CD4-positive, alpha-beta memory T cell (primary cell): ENCODE measurements at regions of chr21 and their contacts with region 1.

Region 1: GRCh38 chr21:33360881-33361602 is 36.3 kb downstream of the IFNAR1 start:
- DNase-seq: peak; percentile 82 to 87 (median 83)
- H3K4me3 ChIP-seq: peak overlapping the region; percentile 47 to 58
- H3K4me3 Mint-ChIP-seq: peak overlapping the region; percentile 83 to 97 (median 91)
- H3K27ac ChIP-seq: peak overlapping the region; percentile 47
- H3K27ac Mint-ChIP-seq: peak overlapping the region; percentile 87 to 99 (median 94)
- H3K4me1 ChIP-seq: peaks cover 21% of the 10 kb centered on the region
- H3K4me1 Mint-ChIP-seq: peaks cover 13 to 22% (median 18%) of the 10 kb centered on the region in 4 donors
- H3K27me3 ChIP-seq: no peaks in the 10 kb centered on the region
- H3K27me3 Mint-ChIP-seq: peaks cover 0 to under 1% of the 10 kb centered on the region in 2 donors

Region 2: DNA sequence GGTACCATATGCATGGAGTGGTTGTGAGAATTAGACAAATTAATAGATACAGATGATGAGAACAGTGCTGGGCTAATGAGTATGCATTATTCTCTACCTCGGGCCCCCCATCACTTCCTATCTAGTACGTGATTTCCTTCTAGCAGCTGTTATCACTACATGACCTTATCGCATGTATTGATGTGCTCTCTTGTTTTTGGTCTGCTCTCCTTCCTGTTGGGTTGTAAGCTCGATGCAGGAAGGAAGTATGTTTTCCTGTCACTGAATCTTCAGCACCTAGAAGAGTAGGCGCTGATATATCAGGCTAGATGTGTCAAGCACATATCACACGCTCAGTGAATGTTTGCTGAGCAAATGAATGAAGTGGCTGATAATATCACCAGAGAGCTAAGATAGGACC is 175.2 kb before region 1 on chr21:
- CTCF ChIA-PET with region 1: interaction called, 7 read pairs
- POLR2A ChIA-PET with region 1: interaction called, 11 read pairs
- intact Hi-C with region 1: no loop called
- DNase-seq: peak; percentile 42 to 70 (median 56)
- H3K4me3 ChIP-seq: no peak overlapping the region
- H3K4me3 Mint-ChIP-seq: peak overlapping the region; percentile 18 to 82 (median 71)
- H3K27ac ChIP-seq: peak overlapping the region; percentile 11
- H3K27ac Mint-ChIP-seq: peak overlapping the region; percentile 76 to 93 (median 88)
- H3K4me1 ChIP-seq: peaks cover 38% of the 10 kb centered on the region
- H3K4me1 Mint-ChIP-seq: peaks cover 26 to 47% (median 30%) of the 10 kb centered on the region in 4 donors
- H3K27me3 ChIP-seq: no peaks in the 10 kb centered on the region
- H3K27me3 Mint-ChIP-seq: peaks cover 0 to 1% of the 10 kb centered on the region in 2 donors

Region 3: DNA sequence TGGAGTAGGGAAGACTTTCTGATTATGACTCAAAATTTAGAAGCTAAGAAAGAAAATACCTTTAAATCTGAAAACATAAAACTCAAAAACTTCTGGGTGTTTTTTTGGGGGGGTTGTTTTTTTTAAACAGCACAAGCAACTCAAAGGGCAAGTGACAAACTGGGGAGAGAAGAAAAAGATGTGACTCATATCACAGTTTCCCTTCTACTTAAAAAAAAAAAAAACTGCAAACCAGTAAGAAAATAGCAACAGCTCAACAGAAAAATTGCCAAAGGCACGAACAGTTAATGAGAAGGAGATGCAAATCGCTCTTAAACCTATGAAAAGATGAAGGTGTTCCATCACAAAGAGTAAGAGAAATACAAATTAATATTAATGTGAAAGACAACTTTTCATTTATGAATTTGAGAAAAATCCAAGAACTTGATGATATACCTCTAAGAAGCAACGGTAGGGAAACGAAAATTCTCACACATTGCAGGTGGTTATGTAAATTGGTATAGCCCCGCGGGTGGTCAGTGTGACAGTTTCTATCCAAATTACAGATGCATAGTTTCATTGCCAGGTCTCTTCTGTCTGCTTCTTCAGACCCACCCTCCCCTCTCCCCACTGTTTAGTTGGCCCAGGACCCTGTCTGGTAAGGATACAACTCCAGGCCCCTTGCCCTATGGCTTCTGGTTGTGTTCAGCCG is 122.3 kb before region 1 on chr21:
- CTCF ChIA-PET with region 1: interaction called, 25 read pairs
- POLR2A ChIA-PET with region 1: interaction called, 14 read pairs
- intact Hi-C with region 1: no loop called
- DNase-seq: peak in 4 of 5 donors; percentile 22 to 43 (median 24)
- H3K4me3 ChIP-seq: peak overlapping the region in 1 of 2 donors; percentile 40
- H3K4me3 Mint-ChIP-seq: peak overlapping the region; percentile 64 to 79 (median 70)
- H3K27ac ChIP-seq: peak overlapping the region; percentile 60
- H3K27ac Mint-ChIP-seq: peak overlapping the region; percentile 65 to 94 (median 88)
- H3K4me1 ChIP-seq: peaks cover 93% of the 10 kb centered on the region
- H3K4me1 Mint-ChIP-seq: peaks cover 66 to 92% (median 78%) of the 10 kb centered on the region in 4 donors
- H3K27me3 ChIP-seq: no peaks in the 10 kb centered on the region
- H3K27me3 Mint-ChIP-seq: no peaks in the 10 kb centered on the region

Region 4: GRCh38 chr21:33299181-33299752 is 61.8 kb before region 1 on chr21:
- CTCF ChIA-PET with region 1: interaction called, 19 read pairs
- POLR2A ChIA-PET with region 1: interaction called, 11 read pairs
- intact Hi-C with region 1: no loop called
- DNase-seq: peak; percentile 39 to 58 (median 41)
- H3K4me3 ChIP-seq: peak overlapping the region in 1 of 2 donors; percentile 19
- H3K4me3 Mint-ChIP-seq: peak overlapping the region; percentile 48 to 88 (median 70)
- H3K27ac ChIP-seq: peak overlapping the region; percentile 10
- H3K27ac Mint-ChIP-seq: peak overlapping the region; percentile 69 to 95 (median 84)
- H3K4me1 ChIP-seq: peaks cover 37% of the 10 kb centered on the region
- H3K4me1 Mint-ChIP-seq: peaks cover 33 to 64% (median 44%) of the 10 kb centered on the region in 4 donors
- H3K27me3 ChIP-seq: no peaks in the 10 kb centered on the region
- H3K27me3 Mint-ChIP-seq: no peaks in the 10 kb centered on the region

Region 5: DNA sequence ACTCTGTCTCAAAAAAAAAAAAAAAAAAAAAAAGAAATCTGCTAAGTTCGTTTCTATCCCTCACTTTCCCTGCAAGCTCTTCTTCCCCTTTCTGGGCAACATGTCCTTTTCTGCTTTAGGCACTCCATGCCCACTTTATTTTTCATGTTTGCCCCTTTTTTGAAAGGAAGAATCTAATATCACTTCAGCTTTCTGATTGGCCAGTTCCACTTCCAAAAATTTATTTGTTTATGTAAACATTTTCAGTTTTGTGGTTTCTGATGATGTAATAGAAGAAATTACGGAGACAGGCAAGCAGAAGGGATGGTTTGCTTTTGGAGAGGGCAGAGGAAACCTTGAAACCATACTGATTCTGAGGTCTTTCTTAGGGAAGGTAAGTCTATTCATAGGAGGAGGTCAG is 21.1 kb before region 1 on chr21:
- CTCF ChIA-PET with region 1: interaction called, 90 read pairs
- POLR2A ChIA-PET with region 1: interaction called, 5 read pairs
- intact Hi-C with region 1: no loop called
- DNase-seq: no peak
- H3K4me3 ChIP-seq: no peak overlapping the region
- H3K4me3 Mint-ChIP-seq: no peak overlapping the region
- H3K27ac ChIP-seq: no peak overlapping the region
- H3K27ac Mint-ChIP-seq: peak overlapping the region in 4 of 7 donors; percentile 45 to 81 (median 67)
- H3K4me1 ChIP-seq: no peaks in the 10 kb centered on the region
- H3K4me1 Mint-ChIP-seq: peaks cover 9 to 16% (median 13%) of the 10 kb centered on the region in 4 donors
- H3K27me3 ChIP-seq: no peaks in the 10 kb centered on the region
- H3K27me3 Mint-ChIP-seq: no peaks in the 10 kb centered on the region

Region 6: DNA sequence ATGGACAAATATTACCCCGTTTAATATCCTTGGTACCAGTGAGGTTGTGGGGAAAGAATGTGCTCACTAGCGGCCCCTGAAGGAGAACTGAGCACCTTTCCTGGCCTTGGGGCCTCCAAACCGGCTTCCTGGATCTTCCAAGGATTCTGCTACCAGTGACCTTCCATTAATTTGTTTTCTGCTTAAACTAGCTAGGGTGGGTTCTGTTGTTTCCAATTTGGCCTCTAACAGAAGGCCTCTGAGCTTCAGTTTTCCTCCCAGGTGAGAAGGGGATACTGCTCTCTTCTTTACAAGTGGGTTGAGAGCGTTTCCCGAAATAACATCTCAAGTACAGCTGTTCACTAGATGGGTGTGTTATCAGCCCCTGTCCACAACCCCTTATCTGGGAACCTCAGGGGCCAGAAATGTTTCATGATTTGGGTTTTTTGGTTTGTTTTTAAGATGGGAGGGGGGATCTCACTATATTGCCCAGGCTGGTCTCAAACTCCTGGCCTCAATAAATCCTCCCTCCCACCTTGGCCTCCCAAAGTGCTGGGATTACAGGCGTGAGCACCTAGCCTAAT is 25.3 kb after region 1 on chr21:
- CTCF ChIA-PET with region 1: interaction called, 59 read pairs
- POLR2A ChIA-PET with region 1: interaction called, 62 read pairs
- intact Hi-C with region 1: no loop called
- DNase-seq: no peak
- H3K4me3 ChIP-seq: no peak overlapping the region
- H3K4me3 Mint-ChIP-seq: no peak overlapping the region
- H3K27ac ChIP-seq: no peak overlapping the region
- H3K27ac Mint-ChIP-seq: no peak overlapping the region
- H3K4me1 ChIP-seq: peaks cover 44% of the 10 kb centered on the region
- H3K4me1 Mint-ChIP-seq: peaks cover 33 to 50% (median 43%) of the 10 kb centered on the region in 4 donors
- H3K27me3 ChIP-seq: no peaks in the 10 kb centered on the region
- H3K27me3 Mint-ChIP-seq: peaks cover 0 to 3% of the 10 kb centered on the region in 2 donors

Region 7: GRCh38 chr21:33441489-33442477 is 80.7 kb after region 1 on chr21:
- CTCF ChIA-PET with region 1: interaction called, 75 read pairs
- POLR2A ChIA-PET with region 1: interaction called, 26 read pairs
- intact Hi-C with region 1: loop called (anchors 1 kb)
- DNase-seq: no peak
- H3K4me3 ChIP-seq: no peak overlapping the region
- H3K4me3 Mint-ChIP-seq: no peak overlapping the region
- H3K27ac ChIP-seq: no peak overlapping the region
- H3K27ac Mint-ChIP-seq: peak overlapping the region in 4 of 7 donors; percentile 14 to 53 (median 30)
- H3K4me1 ChIP-seq: no peaks in the 10 kb centered on the region
- H3K4me1 Mint-ChIP-seq: peaks cover 5 to 9% (median 7%) of the 10 kb centered on the region in 4 donors
- H3K27me3 ChIP-seq: no peaks in the 10 kb centered on the region
- H3K27me3 Mint-ChIP-seq: no peaks in the 10 kb centered on the region

Region 8: GRCh38 chr21:33931799-33932390 is 570.9 kb after region 1 on chr21:
- CTCF ChIA-PET with region 1: no interaction called
- POLR2A ChIA-PET with region 1: no interaction called
- intact Hi-C with region 1: no loop called
- DNase-seq: no peak
- H3K4me3 ChIP-seq: peak overlapping the region; percentile 63 to 69
- H3K4me3 Mint-ChIP-seq: peak overlapping the region; percentile 94 to 99 (median 99)
- H3K27ac ChIP-seq: peak overlapping the region; percentile 88
- H3K27ac Mint-ChIP-seq: peak overlapping the region; percentile 95 to 100 (median 99)
- H3K4me1 ChIP-seq: peaks cover 49% of the 10 kb centered on the region
- H3K4me1 Mint-ChIP-seq: peaks cover 24 to 54% (median 36%) of the 10 kb centered on the region in 4 donors
- H3K27me3 ChIP-seq: no peaks in the 10 kb centered on the region
- H3K27me3 Mint-ChIP-seq: no peaks in the 10 kb centered on the region